Endothelial cell of umbilical vein (primary cell): ENCODE measurements at regions of chr6 and their contacts with region 1.

Region 1: GRCh38 chr6:37860226-37860839 is 40.8 kb downstream of the ZFAND3 start:
- DNase-seq: peak; percentile 50
- H3K4me3 ChIP-seq: no peak overlapping the region
- H3K27ac ChIP-seq: no peak overlapping the region
- H3K4me1 ChIP-seq: peaks cover 3% of the 10 kb centered on the region
- H3K27me3 ChIP-seq: no peaks in the 10 kb centered on the region
- CTCF ChIP-seq: peak; percentile 28 to 53
- POLR2A ChIP-seq: no peak

Region 2: DNA sequence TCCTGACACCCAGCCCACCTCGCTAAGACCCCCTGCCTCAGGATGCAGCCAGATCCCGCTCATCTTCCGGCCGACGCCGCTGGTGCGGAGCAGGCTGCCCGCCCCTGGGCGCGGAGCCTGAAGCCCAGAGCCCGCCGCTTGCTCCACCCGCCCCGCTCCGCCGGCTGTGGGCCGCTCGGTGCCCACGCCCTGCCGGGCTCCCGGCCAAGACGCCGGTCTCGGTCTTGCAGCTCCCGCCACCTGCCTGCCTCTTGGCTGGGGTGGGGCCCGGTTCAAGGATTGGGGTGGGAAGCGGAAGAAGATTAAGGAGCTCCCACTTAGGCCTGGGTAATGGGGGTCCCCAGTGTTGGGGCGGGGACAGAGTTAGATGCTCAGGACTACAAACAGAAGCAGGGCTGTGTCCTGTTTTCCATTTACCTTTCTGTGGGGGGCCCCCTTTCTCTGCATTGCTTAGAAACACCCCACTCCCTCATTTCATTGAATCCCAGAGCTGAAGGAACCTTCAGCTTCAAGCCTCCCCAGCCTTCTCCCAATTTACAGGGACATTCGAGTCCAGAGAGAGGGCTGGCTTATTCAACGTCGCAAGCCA is 235.3 kb before region 1 on chr6:
- CTCF ChIA-PET with region 1: no interaction called
- POLR2A ChIA-PET with region 1: no interaction called
- dilution Hi-C with region 1: no loop called
- intact Hi-C with region 1: no loop called
- DNase-seq: peak; percentile 27
- H3K4me3 ChIP-seq: no peak overlapping the region
- H3K27ac ChIP-seq: no peak overlapping the region
- H3K4me1 ChIP-seq: peaks cover 13% of the 10 kb centered on the region
- H3K27me3 ChIP-seq: peaks cover 8 to 35% of the 10 kb centered on the region in 2 experiments
- CTCF ChIP-seq: no peak
- POLR2A ChIP-seq: no peak

Region 3: DNA sequence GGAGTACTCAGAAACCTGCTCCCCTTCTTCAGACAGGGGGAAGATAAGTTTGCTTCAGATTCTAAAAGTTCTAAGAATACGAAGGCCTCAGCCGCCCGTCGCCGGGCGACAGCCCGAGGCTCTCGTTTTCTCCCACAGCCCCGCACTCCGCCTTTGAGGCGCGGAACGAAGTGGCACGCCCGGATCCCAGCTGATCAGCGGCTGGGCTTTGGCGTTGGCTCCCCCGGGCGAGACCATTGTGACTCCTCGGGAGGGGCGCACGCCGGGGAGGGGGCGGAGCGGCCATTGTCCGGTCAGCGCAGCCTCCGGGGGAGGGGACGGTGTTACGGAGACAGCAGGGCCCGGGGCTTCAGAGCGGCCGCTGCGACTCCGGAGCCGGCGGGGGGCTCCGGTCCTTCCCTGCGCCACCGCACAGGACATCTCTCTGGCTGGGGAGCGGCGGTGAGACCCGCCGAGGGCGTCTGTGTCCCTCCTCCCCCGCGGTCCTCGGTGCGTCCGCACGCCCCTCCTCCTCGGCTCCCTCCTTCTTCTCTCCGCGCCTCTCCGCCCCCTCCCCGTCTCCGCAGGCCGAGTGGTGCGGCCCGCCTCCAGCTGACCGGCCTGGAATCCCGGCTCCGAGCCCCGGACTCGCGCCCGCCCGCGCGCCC is 41.0 kb before region 1 on chr6 and contains the start of gene ZFAND3:
- CTCF ChIA-PET with region 1: interaction called, 8 read pairs
- POLR2A ChIA-PET with region 1: interaction called, 4 read pairs
- dilution Hi-C with region 1: no loop called
- intact Hi-C with region 1: loop called (anchors 2 kb)
- DNase-seq: peak; percentile 95
- H3K4me3 ChIP-seq: peak within 1 kb of the TSS; percentile 88 to 92 (median 90)
- H3K27ac ChIP-seq: peak within 1 kb of the TSS; percentile 96
- H3K4me1 ChIP-seq: peaks cover 33% of the 10 kb centered on the region
- H3K27me3 ChIP-seq: peaks cover 13 to 23% of the 10 kb centered on the region in 2 experiments
- CTCF ChIP-seq: no peak
- POLR2A ChIP-seq: peak; percentile 65
- total RNA-seq, gene ZFAND3: 54.2 and 55.3 TPM in 2 replicates

Region 4: GRCh38 chr6:37826188-37826587 is 34.1 kb before region 1 on chr6:
- CTCF ChIA-PET with region 1: interaction called, 14 read pairs
- POLR2A ChIA-PET with region 1: interaction called, 3 read pairs
- dilution Hi-C with region 1: no loop called
- intact Hi-C with region 1: loop called (anchors 2 kb)
- DNase-seq: no peak
- H3K4me3 ChIP-seq: no peak overlapping the region
- H3K27ac ChIP-seq: no peak overlapping the region
- H3K4me1 ChIP-seq: peaks cover 25% of the 10 kb centered on the region
- H3K27me3 ChIP-seq: no peaks in the 10 kb centered on the region
- CTCF ChIP-seq: no peak
- POLR2A ChIP-seq: no peak

Region 5: GRCh38 chr6:37903351-37904340 is 43.3 kb after region 1 on chr6:
- CTCF ChIA-PET with region 1: no interaction called
- POLR2A ChIA-PET with region 1: no interaction called
- dilution Hi-C with region 1: no loop called
- intact Hi-C with region 1: no loop called
- DNase-seq: no peak
- H3K4me3 ChIP-seq: no peak overlapping the region
- H3K27ac ChIP-seq: no peak overlapping the region
- H3K4me1 ChIP-seq: peaks cover 15% of the 10 kb centered on the region
- H3K27me3 ChIP-seq: no peaks in the 10 kb centered on the region
- CTCF ChIP-seq: no peak
- POLR2A ChIP-seq: no peak

Region 6: GRCh38 chr6:38012573-38012972 is 152.2 kb after region 1 on chr6:
- CTCF ChIA-PET with region 1: no interaction called
- POLR2A ChIA-PET with region 1: no interaction called
- dilution Hi-C with region 1: no loop called
- intact Hi-C with region 1: loop called (anchors 1 kb)
- DNase-seq: peak; percentile 55
- H3K4me3 ChIP-seq: no peak overlapping the region
- H3K27ac ChIP-seq: no peak overlapping the region
- H3K4me1 ChIP-seq: no peaks in the 10 kb centered on the region
- H3K27me3 ChIP-seq: no peaks in the 10 kb centered on the region
- CTCF ChIP-seq: peak; percentile 56 to 70
- POLR2A ChIP-seq: no peak

Region 7: GRCh38 chr6:38155621-38156204 is 295.4 kb after region 1 on chr6:
- CTCF ChIA-PET with region 1: no interaction called
- POLR2A ChIA-PET with region 1: no interaction called
- dilution Hi-C with region 1: no loop called
- intact Hi-C with region 1: no loop called
- DNase-seq: peak; percentile 69
- H3K4me3 ChIP-seq: no peak overlapping the region
- H3K27ac ChIP-seq: peak overlapping the region; percentile 100
- H3K4me1 ChIP-seq: peaks cover 21% of the 10 kb centered on the region
- H3K27me3 ChIP-seq: no peaks in the 10 kb centered on the region
- CTCF ChIP-seq: no peak
- POLR2A ChIP-seq: no peak

Region 8: DNA sequence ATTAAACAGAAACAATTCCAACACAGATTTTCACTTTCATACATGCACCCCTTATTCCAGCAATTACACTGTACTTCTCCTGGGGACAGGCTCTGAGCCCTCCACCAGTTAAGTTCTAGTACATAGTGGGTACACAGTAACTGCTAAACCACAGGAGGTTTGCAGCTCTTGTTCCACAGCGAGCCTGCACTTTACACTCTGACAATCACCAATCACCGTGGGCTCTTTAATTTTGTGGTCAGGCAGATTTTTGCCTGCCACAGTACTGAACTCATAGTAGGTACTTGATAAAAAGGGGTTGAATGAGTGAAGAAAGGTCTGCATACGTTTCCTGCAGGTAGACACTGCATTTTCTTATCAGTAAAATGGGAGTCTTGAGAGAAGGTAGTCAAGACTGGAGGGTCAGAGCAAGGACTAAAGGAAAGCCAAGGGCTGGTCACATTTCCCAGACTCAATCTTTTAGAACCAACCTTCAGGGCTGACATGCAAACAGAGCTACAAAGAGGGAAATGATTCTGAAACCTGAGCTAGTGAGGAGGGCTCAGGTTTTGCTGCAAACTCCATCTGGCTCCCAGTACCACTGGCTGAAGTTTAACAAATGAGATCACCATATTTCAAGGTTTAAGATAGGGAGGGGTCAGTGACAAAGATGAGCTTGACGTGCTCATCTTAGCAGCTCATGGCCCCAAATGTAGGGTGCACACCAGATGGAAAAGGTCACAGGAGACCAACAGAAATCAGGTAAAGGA is 374.8 kb after region 1 on chr6:
- CTCF ChIA-PET with region 1: no interaction called
- POLR2A ChIA-PET with region 1: no interaction called
- dilution Hi-C with region 1: no loop called
- intact Hi-C with region 1: no loop called
- DNase-seq: no peak
- H3K4me3 ChIP-seq: no peak overlapping the region
- H3K27ac ChIP-seq: no peak overlapping the region
- H3K4me1 ChIP-seq: peaks cover 13% of the 10 kb centered on the region
- H3K27me3 ChIP-seq: no peaks in the 10 kb centered on the region
- CTCF ChIP-seq: no peak
- POLR2A ChIP-seq: no peak